Sigmoid colon (tissue), 7 donors: ENCODE measurements at regions of chr4 and their contacts with region 1.

Region 1: GRCh38 chr4:107666134-107666533 is 53.9 kb downstream of the PAPSS1 start:
- DNase-seq: no peak
- H3K4me3 ChIP-seq: peak overlapping the region in 2 of 4 donors; percentile 9 to 20
- H3K27ac ChIP-seq: peak overlapping the region in 3 of 4 donors; percentile 53 to 60 (median 54)
- H3K4me1 ChIP-seq: peaks cover 0 to 46% (median 24%) of the 10 kb centered on the region in 4 donors
- H3K27me3 ChIP-seq: no peaks in the 10 kb centered on the region
- CTCF ChIP-seq: peak; percentile 22 to 45 (median 40)
- EP300 ChIP-seq: no peak
- POLR2A ChIP-seq: no peak

Region 2: GRCh38 chr4:106369456-106370060 is 1296.6 kb before region 1 on chr4:
- intact Hi-C with region 1: loop called (anchors 5 kb)
- DNase-seq: no peak
- H3K4me3 ChIP-seq: no peak overlapping the region
- H3K27ac ChIP-seq: no peak overlapping the region
- H3K4me1 ChIP-seq: peaks cover 0 to 17% (median 15%) of the 10 kb centered on the region in 4 donors
- H3K27me3 ChIP-seq: no peaks in the 10 kb centered on the region
- CTCF ChIP-seq: peak; percentile 49 to 68 (median 63)
- EP300 ChIP-seq: no peak
- POLR2A ChIP-seq: no peak

Region 3: DNA sequence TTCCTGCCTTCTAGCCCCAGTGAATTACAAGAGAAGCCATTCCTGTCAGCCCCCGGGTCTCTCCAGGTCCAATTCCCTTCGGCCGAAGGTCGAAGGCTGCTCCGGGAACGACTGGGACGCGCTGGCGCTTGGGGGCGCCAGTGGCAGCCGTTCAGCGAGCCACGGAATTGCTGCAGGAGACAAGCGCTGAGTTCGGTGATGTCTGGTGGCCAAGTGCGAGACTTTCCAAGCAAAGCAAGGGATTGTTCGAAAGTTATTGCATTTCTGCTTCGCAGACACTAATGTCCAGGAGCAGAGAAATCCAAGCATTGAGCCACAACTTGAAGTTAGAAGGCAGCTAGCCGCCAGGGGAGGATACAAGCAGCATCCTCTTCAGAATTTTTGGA is 628.9 kb before region 1 on chr4:
- intact Hi-C with region 1: loop called (anchors 1 kb)
- DNase-seq: peak; percentile 73
- H3K4me3 ChIP-seq: peak overlapping the region in 3 of 4 donors; percentile 43 to 50 (median 49)
- H3K27ac ChIP-seq: no peak overlapping the region
- H3K4me1 ChIP-seq: peaks cover 0 to 41% (median 38%) of the 10 kb centered on the region in 4 donors
- H3K27me3 ChIP-seq: peaks cover 0 to 61% (median 4%) of the 10 kb centered on the region in 3 donors
- CTCF ChIP-seq: peak in 2 of 4 experiments; percentile 18 to 57
- EP300 ChIP-seq: no peak
- POLR2A ChIP-seq: no peak

Region 4: DNA sequence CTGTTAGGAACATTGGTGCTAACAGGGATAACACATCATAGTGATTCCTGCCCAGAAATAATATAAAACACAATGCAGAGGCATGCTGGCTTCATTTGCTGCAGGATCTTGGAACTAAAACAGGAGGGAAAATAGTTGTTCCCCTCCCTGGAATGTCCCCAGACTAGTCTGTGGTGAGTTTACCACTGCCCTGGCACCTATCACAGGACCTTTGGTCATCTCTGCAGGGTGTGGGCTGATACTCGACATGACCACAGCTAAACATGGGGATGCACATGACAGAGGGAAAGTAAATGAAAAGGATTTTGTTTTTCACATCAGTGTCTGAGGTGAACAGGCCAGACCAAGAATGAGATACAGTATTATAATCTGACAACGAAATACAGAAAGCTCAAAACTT is 469.8 kb before region 1 on chr4:
- intact Hi-C with region 1: loop called (anchors 10 kb)
- DNase-seq: no peak
- H3K4me3 ChIP-seq: no peak overlapping the region
- H3K27ac ChIP-seq: peak overlapping the region in 3 of 4 donors; percentile 9 to 22 (median 14)
- H3K4me1 ChIP-seq: peaks cover 0 to 32% (median 25%) of the 10 kb centered on the region in 4 donors
- H3K27me3 ChIP-seq: no peaks in the 10 kb centered on the region
- CTCF ChIP-seq: no peak
- EP300 ChIP-seq: no peak
- POLR2A ChIP-seq: no peak

Region 5: GRCh38 chr4:107379054-107379869 is 286.9 kb before region 1 on chr4:
- intact Hi-C with region 1: loop called (anchors 5 kb)
- DNase-seq: no peak
- H3K4me3 ChIP-seq: no peak overlapping the region
- H3K27ac ChIP-seq: no peak overlapping the region
- H3K4me1 ChIP-seq: peaks cover 0 to 9% (median 2%) of the 10 kb centered on the region in 4 donors
- H3K27me3 ChIP-seq: no peaks in the 10 kb centered on the region
- CTCF ChIP-seq: peak in 1 of 4 experiments; percentile 12
- EP300 ChIP-seq: no peak
- POLR2A ChIP-seq: no peak

Region 6: DNA sequence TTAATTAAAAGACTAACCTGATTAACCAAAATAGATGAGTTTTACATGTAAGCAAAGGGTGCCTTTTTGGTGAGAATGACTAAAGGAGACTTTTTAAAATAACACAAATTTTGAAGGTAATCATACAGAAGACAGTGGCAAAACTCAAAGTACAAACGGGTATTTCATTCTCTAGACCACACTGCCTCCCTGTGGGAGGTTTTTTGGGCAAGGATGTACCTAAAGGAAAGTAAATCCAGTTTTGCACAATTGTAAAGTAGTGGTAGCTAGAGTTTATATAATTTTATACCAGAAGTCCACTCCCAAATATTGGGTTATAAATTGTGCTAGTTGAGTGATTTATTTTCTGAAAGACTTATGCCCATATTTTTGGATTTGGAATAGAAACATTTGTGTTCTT is 147.1 kb before region 1 on chr4:
- intact Hi-C with region 1: loop called (anchors 2 kb)
- DNase-seq: no peak
- H3K4me3 ChIP-seq: no peak overlapping the region
- H3K27ac ChIP-seq: no peak overlapping the region
- H3K4me1 ChIP-seq: no peaks in the 10 kb centered on the region
- H3K27me3 ChIP-seq: no peaks in the 10 kb centered on the region
- CTCF ChIP-seq: peak in 3 of 4 experiments; percentile 19 to 48 (median 22)
- EP300 ChIP-seq: no peak
- POLR2A ChIP-seq: no peak

Region 7: DNA sequence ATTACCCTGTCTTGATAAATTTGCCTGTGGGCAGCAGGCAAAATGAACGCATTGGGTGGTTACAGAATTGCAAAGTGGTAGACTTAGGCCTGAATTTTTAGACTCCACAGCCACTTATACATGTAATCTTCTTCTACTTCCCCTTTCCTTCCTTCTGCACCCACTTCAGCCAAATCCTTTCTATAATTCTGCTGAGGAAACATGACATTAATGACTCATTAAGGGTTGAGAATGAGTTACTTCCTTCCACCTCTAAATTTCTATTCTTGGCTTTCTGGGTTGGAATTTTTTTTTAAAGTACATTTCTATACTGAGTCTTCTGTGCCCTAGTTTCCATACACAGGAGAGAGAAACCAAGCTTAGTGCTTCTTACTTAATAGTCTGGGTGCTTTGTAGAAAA is 43.8 kb after region 1 on chr4:
- intact Hi-C with region 1: no loop called
- DNase-seq: no peak
- H3K4me3 ChIP-seq: no peak overlapping the region
- H3K27ac ChIP-seq: no peak overlapping the region
- H3K4me1 ChIP-seq: no peaks in the 10 kb centered on the region
- H3K27me3 ChIP-seq: no peaks in the 10 kb centered on the region
- CTCF ChIP-seq: no peak
- EP300 ChIP-seq: no peak
- POLR2A ChIP-seq: no peak

Region 8: DNA sequence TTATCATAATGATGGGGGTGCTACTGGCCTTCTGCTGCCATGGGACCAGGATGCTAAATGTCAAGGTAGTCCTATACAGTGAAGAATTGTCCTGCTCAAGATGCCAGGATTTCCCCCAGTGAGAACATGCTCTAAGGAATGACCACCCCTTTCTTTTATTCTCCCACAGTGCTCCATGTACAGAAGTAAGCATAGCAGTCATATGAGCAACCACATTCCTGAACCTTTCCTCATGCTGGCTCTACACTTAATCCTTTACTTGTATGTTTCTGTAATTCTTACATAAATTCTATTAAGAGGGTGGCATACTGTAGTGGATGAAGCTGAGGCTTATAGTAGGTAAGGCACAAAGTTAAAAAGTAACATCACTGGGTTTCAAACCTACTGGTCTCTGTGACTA is 285.4 kb after region 1 on chr4:
- intact Hi-C with region 1: no loop called
- DNase-seq: no peak
- H3K4me3 ChIP-seq: no peak overlapping the region
- H3K27ac ChIP-seq: no peak overlapping the region
- H3K4me1 ChIP-seq: no peaks in the 10 kb centered on the region
- H3K27me3 ChIP-seq: no peaks in the 10 kb centered on the region
- CTCF ChIP-seq: no peak
- EP300 ChIP-seq: no peak
- POLR2A ChIP-seq: no peak